ACHN (cell line): ENCODE measurements at regions of chr17 and their contacts with region 1.

Region 1: DNA sequence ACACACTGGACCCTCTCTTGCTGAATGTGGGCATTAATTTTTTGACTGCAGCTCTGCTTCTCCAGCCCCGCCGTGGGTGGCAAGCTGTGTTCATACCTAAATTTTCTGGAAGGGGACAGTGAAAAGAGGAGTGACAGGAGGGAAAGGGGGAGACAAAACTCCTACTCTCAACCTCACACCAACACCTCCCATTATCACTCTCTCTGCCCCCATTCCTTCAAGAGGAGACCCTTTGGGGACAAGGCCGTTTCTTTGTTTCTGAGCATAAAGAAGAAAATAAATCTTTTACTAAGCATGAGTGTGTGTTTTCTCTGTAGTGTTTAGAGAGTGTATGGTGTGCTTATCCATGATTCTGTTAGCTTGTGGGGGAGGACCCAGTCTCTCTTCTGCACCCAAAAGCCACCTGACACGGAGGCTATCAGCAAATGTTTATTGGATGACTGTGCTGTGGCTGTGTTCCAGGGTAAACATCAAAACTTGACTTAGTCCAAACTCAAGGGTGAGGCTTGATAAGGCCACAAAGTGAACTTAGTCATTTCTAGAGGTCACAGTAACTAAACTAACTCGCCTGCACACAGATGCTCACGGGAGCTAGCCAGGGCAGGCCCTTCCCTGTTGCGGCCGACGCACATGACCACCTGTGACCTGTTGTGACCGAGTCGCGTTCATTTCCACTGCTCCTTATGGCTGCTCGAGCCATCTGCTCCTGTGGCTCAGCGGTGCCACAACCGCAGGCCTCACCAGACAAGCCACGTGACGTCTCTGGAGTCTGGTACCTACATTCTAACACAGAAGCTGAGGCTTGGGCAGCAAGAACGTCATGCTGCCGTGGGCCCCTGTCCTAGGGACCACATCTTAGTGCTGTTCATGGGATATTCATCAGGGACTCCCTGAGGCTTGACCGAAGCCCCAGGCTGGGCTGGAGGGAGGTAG is 9.8 kb upstream of the MED11 start:
- DNase-seq: peak; percentile 87

Region 2: DNA sequence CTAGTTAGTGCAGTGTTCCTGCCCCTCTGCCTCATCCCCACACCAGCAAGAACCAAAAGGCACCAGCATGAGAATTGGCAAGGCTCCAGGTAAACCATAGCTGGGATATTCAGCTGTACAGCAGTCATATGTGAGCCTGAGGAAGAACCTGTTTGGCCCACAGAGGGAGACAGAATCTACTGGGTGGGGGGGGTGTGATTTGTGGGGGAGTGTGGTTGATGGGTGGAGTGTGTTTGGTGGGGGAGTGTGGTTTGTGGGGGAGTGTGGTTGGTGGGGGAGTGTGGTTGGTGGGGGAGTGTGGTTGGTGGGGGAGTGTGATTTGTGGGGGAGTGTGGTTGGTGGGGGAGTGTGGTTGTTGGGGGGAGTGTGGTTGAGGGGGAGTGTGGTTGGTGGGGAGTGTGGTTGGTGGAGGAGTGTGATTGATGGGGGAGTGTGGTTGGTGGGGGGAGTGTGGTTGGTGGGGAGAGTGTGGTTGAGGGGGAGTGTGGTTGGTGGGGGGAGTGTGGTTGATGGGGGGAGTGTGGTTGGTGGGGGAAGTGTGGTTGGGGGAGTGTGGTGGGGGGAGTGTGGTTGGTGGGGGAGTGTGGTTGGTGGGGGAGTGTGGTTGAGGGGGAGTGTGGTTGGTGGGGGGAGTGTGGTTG is 131.2 kb after region 1 on chr17:
- in situ Hi-C with region 1: loop called (anchors 10 kb)
- DNase-seq: peak; percentile 69